ENCODE measurements at regions of chr22 and their contacts with region 1.

Region 1: GRCh38 chr22:50525390-50526068 is at the start of gene SCO2:
- DNase-seq: peak; percentile 99
- H3K4me3 Mint-ChIP-seq: peak within 1 kb of the TSS; percentile 83
- H3K27ac Mint-ChIP-seq: peak within 1 kb of the TSS; percentile 95
- H3K4me1 Mint-ChIP-seq: peaks cover 42% of the 10 kb centered on the region
- H3K27me3 Mint-ChIP-seq: no peaks in the 10 kb centered on the region
- total RNA-seq, gene SCO2: 1.9 to 5.6 TPM

Region 2: DNA sequence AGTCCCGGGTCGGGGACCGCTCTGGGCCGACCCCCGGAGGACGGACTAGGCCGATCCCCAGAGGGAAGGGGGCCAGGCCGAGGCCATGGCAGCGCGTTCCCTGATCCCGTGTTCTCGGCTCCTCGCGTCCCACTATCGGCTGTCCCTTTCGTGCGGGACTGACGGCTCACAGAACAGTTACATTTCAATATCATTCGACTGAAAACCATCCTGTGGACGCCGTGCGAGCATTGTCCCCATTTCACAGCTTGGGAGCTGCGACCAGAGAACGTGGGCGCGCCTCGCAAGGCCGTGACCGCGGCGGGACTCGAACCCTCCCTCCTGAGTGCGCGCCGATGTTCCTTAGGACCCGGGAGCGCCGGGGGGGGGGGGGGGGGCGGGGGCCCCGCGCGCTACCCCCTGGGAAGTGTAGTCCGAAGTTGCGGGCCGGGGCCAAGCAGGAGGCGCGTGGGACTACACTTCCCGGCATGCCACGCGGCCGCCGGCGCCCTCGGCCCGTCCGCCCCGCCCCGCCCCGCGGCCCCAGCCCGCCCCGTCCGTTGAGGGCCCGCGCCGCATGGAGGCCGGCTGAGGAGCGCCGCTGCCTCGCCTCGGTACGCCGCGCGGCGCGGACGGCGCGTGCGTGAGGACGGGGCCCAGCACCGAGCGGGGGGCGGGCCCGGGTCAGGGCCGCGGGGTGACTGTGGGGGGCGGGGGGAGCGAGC is 340.0 kb before region 1 on chr22 and contains the start of gene TRABD:
- CTCF ChIA-PET with region 1: no interaction called
- POLR2A ChIA-PET with region 1: interaction called, 4 read pairs
- intact Hi-C with region 1: loop called (anchors 5 kb)
- DNase-seq: peak; percentile 93
- H3K4me3 Mint-ChIP-seq: peak within 1 kb of the TSS; percentile 88
- H3K27ac Mint-ChIP-seq: peak within 1 kb of the TSS; percentile 89
- H3K4me1 Mint-ChIP-seq: peaks cover 28% of the 10 kb centered on the region
- H3K27me3 Mint-ChIP-seq: no peaks in the 10 kb centered on the region
- total RNA-seq, gene TRABD: 88.6 to 89.2 TPM

Region 3: GRCh38 chr22:50376085-50376651 is 149.4 kb before region 1 on chr22:
- CTCF ChIA-PET with region 1: no interaction called
- POLR2A ChIA-PET with region 1: no interaction called
- intact Hi-C with region 1: no loop called
- DNase-seq: peak; percentile 32
- H3K4me3 Mint-ChIP-seq: no peak overlapping the region
- H3K27ac Mint-ChIP-seq: no peak overlapping the region
- H3K4me1 Mint-ChIP-seq: peaks cover 13% of the 10 kb centered on the region
- H3K27me3 Mint-ChIP-seq: no peaks in the 10 kb centered on the region

Region 4: DNA sequence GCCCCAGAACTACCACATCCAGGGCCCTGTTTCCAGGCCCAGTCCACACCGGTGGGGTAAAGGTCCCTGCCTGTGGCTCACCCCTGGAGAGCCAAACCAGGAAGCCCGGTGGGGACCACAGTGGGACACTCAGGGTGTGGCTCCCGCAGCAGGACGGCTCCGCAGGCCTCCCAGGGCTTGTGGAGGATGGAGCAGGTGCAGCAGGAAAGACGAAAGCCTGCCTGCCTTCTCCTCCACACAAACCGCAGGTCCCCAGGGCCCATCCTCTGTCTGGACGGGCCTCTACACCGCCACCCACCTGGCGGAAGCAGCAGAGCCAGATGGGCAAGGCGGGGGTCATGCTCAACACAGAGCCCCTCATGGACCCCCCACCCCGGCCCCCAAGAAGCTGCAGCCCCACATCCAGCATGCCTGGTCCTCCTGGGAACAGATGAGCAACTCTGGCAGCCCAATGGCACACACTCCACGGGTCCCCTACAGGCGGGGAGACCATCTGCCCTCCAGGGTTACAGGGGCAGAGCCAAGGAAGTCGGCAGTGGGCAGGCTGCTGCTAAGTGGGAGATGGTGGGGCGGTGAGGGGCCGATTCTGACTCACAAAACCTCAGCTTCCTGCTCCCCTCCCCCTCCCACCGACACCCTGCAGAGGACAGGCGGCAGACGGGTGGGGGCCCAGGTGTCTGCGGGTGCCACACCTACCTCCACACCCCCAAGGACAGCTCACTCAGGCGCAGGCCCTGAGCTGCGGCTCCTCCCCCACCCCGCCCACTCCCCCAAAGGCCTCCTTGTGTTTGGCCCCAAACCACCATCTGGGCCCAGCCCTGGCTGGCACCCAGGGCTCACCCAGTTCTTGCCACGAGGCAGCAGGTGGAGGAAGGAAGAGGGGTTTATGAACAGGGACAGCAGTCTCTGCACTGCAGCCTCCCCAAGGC is 55.9 kb before region 1 on chr22:
- CTCF ChIA-PET with region 1: interaction called, 18 read pairs
- POLR2A ChIA-PET with region 1: interaction called, 4 read pairs
- intact Hi-C with region 1: no loop called
- DNase-seq: peak; percentile 97
- H3K4me3 Mint-ChIP-seq: peak overlapping the region; percentile 53
- H3K27ac Mint-ChIP-seq: peak overlapping the region; percentile 92
- H3K4me1 Mint-ChIP-seq: peaks cover 55% of the 10 kb centered on the region
- H3K27me3 Mint-ChIP-seq: no peaks in the 10 kb centered on the region

Region 5: DNA sequence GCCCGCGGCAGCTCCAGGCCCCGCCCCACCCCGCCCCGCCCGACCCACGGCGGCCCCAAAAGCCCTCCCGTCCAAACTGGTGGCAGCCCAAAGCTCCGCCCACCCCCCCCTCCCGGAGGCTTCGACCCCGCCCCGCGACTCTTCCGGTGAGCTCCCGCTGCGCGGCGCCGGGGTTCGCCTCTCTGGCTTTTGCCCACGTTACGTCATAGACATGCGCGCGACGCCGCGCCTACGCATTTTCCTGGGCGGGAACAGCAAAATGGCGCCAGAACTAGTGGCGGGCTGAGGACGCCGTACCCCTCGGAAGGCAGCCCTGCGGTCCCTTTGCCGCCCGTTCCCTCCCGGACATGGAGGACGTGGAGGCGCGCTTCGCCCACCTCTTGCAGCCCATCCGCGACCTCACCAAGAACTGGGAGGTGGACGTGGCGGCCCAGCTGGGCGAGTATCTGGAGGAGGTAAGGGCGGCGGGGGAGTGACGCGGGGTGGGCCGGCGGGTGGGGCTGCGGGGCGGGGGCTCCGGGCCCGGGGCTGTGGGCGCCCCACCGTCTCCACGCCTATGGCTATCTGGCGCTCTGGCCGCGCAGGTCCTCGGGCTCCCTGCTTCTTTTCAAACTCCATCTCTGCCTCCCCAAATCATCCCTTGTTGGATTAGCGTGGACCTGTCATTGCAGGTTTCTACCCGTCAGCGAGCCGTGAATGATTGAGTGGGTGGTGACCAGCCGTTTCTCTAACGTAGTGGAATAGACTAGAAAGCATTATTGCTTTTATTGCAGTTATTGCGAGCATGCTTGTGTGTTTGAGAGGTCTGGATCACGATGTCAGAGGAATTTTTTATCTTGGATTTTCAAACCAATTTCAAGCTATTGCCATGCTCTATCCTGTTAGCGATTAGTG is 17.3 kb before region 1 on chr22 and contains the start of gene NCAPH2:
- CTCF ChIA-PET with region 1: interaction called, 94 read pairs
- POLR2A ChIA-PET with region 1: interaction called, 101 read pairs
- intact Hi-C with region 1: loop called (anchors 1 kb)
- DNase-seq: peak; percentile 99
- H3K4me3 Mint-ChIP-seq: peak within 1 kb of the TSS; percentile 97
- H3K27ac Mint-ChIP-seq: peak within 1 kb of the TSS; percentile 97
- H3K4me1 Mint-ChIP-seq: peaks cover 20% of the 10 kb centered on the region
- H3K27me3 Mint-ChIP-seq: no peaks in the 10 kb centered on the region
- total RNA-seq, gene NCAPH2: 134 to 138 TPM

Region 6: GRCh38 chr22:50544078-50544745 is 18.7 kb after region 1 on chr22:
- CTCF ChIA-PET with region 1: interaction called, 88 read pairs
- POLR2A ChIA-PET with region 1: interaction called, 139 read pairs
- intact Hi-C with region 1: loop called (anchors 2 kb)
- DNase-seq: peak; percentile 92
- H3K4me3 Mint-ChIP-seq: peak overlapping the region; percentile 59
- H3K27ac Mint-ChIP-seq: peak overlapping the region; percentile 76
- H3K4me1 Mint-ChIP-seq: peaks cover 57% of the 10 kb centered on the region
- H3K27me3 Mint-ChIP-seq: no peaks in the 10 kb centered on the region

Measured in activated CD4-positive, alpha-beta memory T cell treated with anti-CD3 and anti-CD28 coated beads for 36 hours (primary cell).